Cardiac septum (tissue), 1 donor: ENCODE measurements at regions of chr7 and their contacts with region 1.

Region 1: DNA sequence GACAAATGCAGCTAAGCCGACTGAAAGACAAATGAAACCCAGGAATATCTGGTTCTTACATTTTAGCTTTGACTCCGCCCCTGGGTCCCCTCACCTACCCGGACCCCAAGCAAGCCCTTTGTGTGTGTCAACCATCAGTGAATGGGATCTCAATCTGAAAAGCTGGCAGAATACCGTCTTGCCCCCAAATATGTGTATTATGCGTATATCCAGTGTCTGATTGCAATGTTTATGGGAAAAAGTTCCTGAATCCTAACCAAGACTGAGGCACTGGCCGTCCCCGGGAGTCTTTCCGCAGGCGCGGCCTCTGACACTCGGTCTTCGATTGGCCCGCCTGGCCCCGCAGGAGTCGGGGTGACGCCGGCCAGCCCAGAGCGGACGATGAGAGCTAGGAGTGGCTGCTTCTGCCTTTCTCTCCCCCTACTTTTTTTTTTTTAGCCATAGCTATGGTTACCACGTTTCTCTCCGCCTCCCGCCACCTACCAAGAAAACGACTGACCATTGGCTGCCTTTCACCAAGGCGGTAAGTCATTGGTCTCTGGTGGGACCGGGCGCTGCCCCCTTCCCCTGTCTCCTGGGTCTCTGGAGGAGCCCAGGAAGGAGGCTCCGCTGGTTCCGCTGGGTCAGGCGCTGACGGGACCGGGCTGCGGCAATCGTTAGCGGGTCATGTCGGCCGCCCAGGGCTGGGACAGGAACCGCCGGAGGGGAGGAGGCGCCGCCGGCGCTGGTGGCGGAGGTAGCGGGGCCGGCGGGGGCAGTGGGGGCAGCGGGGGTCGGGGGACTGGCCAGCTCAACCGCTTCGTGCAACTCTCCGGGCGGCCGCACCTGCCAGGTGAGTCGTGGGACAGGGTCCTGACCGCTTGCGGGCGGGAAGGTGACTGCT is at the start of gene KLHDC10:
- DNase-seq: peak; percentile 98
- total RNA-seq, gene KLHDC10: 22.5 TPM

Region 2: GRCh38 chr7:130831817-130832481 is 761.7 kb after region 1 on chr7:
- intact Hi-C with region 1: loop called (anchors 5 kb)
- DNase-seq: no peak